ENCODE measurements at regions of chr6 and their contacts with region 1.

Region 1: GRCh38 chr6:159252955-159253508 is 83.8 kb downstream of the FNDC1 start:
- DNase-seq: peak in 3 of 14 experiments; percentile 29 to 40 (median 38)
- ATAC-seq: peak; percentile 34
- H3K4me3 ChIP-seq: no peak overlapping the region
- H3K4me3 Mint-ChIP-seq: no peak overlapping the region
- H3K27ac ChIP-seq: no peak overlapping the region
- H3K27ac Mint-ChIP-seq: no peak overlapping the region
- H3K4me1 ChIP-seq: no peaks in the 10 kb centered on the region
- H3K4me1 Mint-ChIP-seq: no peaks in the 10 kb centered on the region
- H3K27me3 ChIP-seq: peaks cover 0 to 4% of the 10 kb centered on the region in 2 experiments
- H3K27me3 Mint-ChIP-seq: peaks cover 23% of the 10 kb centered on the region
- CTCF ChIP-seq: peak; percentile 43

Region 2: GRCh38 chr6:159203304-159204005 is 49.6 kb before region 1 on chr6:
- CTCF ChIA-PET with region 1: no interaction called
- POLR2A ChIA-PET with region 1: no interaction called
- intact Hi-C with region 1: no loop called
- DNase-seq: no peak
- ATAC-seq: no peak
- H3K4me3 ChIP-seq: no peak overlapping the region
- H3K4me3 Mint-ChIP-seq: no peak overlapping the region
- H3K27ac ChIP-seq: no peak overlapping the region
- H3K27ac Mint-ChIP-seq: no peak overlapping the region
- H3K4me1 ChIP-seq: no peaks in the 10 kb centered on the region
- H3K4me1 Mint-ChIP-seq: no peaks in the 10 kb centered on the region
- H3K27me3 ChIP-seq: peaks cover 0 to under 1% of the 10 kb centered on the region in 2 experiments
- H3K27me3 Mint-ChIP-seq: peaks cover 22% of the 10 kb centered on the region
- CTCF ChIP-seq: no peak

Region 3: GRCh38 chr6:159305804-159306537 is 52.9 kb after region 1 on chr6:
- CTCF ChIA-PET with region 1: no interaction called
- POLR2A ChIA-PET with region 1: no interaction called
- intact Hi-C with region 1: no loop called
- DNase-seq: no peak
- ATAC-seq: no peak
- H3K4me3 ChIP-seq: no peak overlapping the region
- H3K4me3 Mint-ChIP-seq: no peak overlapping the region
- H3K27ac ChIP-seq: no peak overlapping the region
- H3K27ac Mint-ChIP-seq: no peak overlapping the region
- H3K4me1 ChIP-seq: no peaks in the 10 kb centered on the region
- H3K4me1 Mint-ChIP-seq: no peaks in the 10 kb centered on the region
- H3K27me3 ChIP-seq: peaks cover 0 to 4% of the 10 kb centered on the region in 2 experiments
- H3K27me3 Mint-ChIP-seq: peaks cover 31% of the 10 kb centered on the region
- CTCF ChIP-seq: no peak

Region 4: GRCh38 chr6:159654483-159655098 is 401.6 kb after region 1 on chr6:
- CTCF ChIA-PET with region 1: no interaction called
- POLR2A ChIA-PET with region 1: no interaction called
- intact Hi-C with region 1: loop called in 1 of 2 experiments (anchors 2 kb)
- DNase-seq: peak in 3 of 14 experiments; percentile 59 to 69 (median 65)
- ATAC-seq: no peak
- H3K4me3 ChIP-seq: no peak overlapping the region
- H3K4me3 Mint-ChIP-seq: no peak overlapping the region
- H3K27ac ChIP-seq: no peak overlapping the region
- H3K27ac Mint-ChIP-seq: no peak overlapping the region
- H3K4me1 ChIP-seq: no peaks in the 10 kb centered on the region
- H3K4me1 Mint-ChIP-seq: no peaks in the 10 kb centered on the region
- H3K27me3 ChIP-seq: no peaks in the 10 kb centered on the region
- H3K27me3 Mint-ChIP-seq: no peaks in the 10 kb centered on the region
- CTCF ChIP-seq: peak; percentile 79

Region 5: DNA sequence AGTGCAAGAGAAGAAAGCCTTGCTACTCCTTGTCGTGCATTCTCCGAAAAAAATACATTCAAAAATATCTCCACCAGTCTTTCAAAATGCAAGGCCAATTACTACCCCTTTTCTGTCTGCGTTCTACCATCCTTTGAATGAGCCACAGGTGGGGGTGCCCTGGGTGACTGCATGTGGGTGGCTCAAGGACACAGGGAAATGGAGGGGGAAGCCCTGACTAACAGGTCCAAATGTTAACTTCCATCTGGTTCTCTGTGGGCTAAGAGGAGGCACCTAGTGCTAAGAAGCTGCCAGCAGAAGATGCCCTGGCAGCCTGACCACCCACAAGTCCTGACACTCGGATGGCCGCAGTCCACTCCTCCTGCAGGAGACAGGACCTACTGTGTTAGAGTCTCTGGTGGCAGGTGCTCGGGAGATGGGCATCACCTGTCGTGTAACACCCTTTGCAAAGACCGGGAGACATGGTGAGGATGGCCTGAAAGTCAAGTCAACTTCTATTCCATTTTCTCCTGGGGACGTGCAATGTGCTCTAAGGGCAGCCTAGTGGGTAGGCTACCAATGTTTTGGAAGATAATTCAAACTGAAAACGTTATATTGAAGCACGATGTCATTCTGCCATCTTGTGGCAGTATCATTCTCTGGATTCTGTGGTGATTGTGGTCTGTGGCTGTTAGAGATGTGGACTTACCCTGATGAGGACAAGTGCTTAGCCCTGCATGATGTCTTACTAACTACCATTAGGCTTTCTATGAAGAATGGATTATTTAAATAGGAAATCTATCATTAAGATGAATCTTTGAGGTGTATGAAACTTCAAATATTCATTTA is 688.5 kb after region 1 on chr6:
- CTCF ChIA-PET with region 1: no interaction called
- POLR2A ChIA-PET with region 1: no interaction called
- intact Hi-C with region 1: loop called in 1 of 2 experiments (anchors 10 kb)
- DNase-seq: peak in 8 of 14 experiments; percentile 5 to 80 (median 22)
- ATAC-seq: peak; percentile 82
- H3K4me3 ChIP-seq: no peak overlapping the region
- H3K4me3 Mint-ChIP-seq: no peak overlapping the region
- H3K27ac ChIP-seq: no peak overlapping the region
- H3K27ac Mint-ChIP-seq: no peak overlapping the region
- H3K4me1 ChIP-seq: peaks cover 4% of the 10 kb centered on the region
- H3K4me1 Mint-ChIP-seq: peaks cover 8% of the 10 kb centered on the region
- H3K27me3 ChIP-seq: no peaks in the 10 kb centered on the region
- H3K27me3 Mint-ChIP-seq: peaks cover 5% of the 10 kb centered on the region
- CTCF ChIP-seq: peak; percentile 46

Region 6: GRCh38 chr6:160520043-160520904 is 1267.2 kb after region 1 on chr6:
- CTCF ChIA-PET with region 1: no interaction called
- POLR2A ChIA-PET with region 1: no interaction called
- intact Hi-C with region 1: no loop called
- DNase-seq: peak; percentile 32 to 84 (median 67)
- ATAC-seq: peak; percentile 79
- H3K4me3 ChIP-seq: peak overlapping the region; percentile 83
- H3K4me3 Mint-ChIP-seq: peak overlapping the region; percentile 98
- H3K27ac ChIP-seq: peak overlapping the region; percentile 39 to 69
- H3K27ac Mint-ChIP-seq: peak overlapping the region; percentile 85
- H3K4me1 ChIP-seq: peaks cover 16% of the 10 kb centered on the region
- H3K4me1 Mint-ChIP-seq: peaks cover 34% of the 10 kb centered on the region
- H3K27me3 ChIP-seq: no peaks in the 10 kb centered on the region
- H3K27me3 Mint-ChIP-seq: no peaks in the 10 kb centered on the region
- CTCF ChIP-seq: peak; percentile 62

Measured in CD4-positive, alpha-beta T cell (primary cell).